CD8-positive, alpha-beta T cell (primary cell): ENCODE measurements at regions of chr2 and their contacts with region 1.

Region 1: GRCh38 chr2:60998628-60999545 is 18.6 kb upstream of the PEX13 start:
- DNase-seq: peak in 3 of 9 experiments; percentile 40 to 77 (median 70)
- ATAC-seq: peak; percentile 91
- H3K4me3 ChIP-seq: no peak overlapping the region
- H3K4me3 Mint-ChIP-seq: no peak overlapping the region
- H3K27ac ChIP-seq: no peak overlapping the region
- H3K27ac Mint-ChIP-seq: no peak overlapping the region
- H3K4me1 ChIP-seq: no peaks in the 10 kb centered on the region
- H3K4me1 Mint-ChIP-seq: no peaks in the 10 kb centered on the region
- H3K27me3 ChIP-seq: no peaks in the 10 kb centered on the region
- H3K27me3 Mint-ChIP-seq: no peaks in the 10 kb centered on the region
- CTCF ChIP-seq: peak; percentile 87

Region 2: GRCh38 chr2:60476206-60476954 is 522.5 kb before region 1 on chr2:
- CTCF ChIA-PET with region 1: no interaction called
- POLR2A ChIA-PET with region 1: no interaction called
- intact Hi-C with region 1: no loop called
- DNase-seq: no peak
- ATAC-seq: no peak
- H3K4me3 ChIP-seq: no peak overlapping the region
- H3K4me3 Mint-ChIP-seq: no peak overlapping the region
- H3K27ac ChIP-seq: no peak overlapping the region
- H3K27ac Mint-ChIP-seq: no peak overlapping the region
- H3K4me1 ChIP-seq: no peaks in the 10 kb centered on the region
- H3K4me1 Mint-ChIP-seq: no peaks in the 10 kb centered on the region
- H3K27me3 ChIP-seq: no peaks in the 10 kb centered on the region
- H3K27me3 Mint-ChIP-seq: peaks cover 6% of the 10 kb centered on the region
- CTCF ChIP-seq: no peak

Region 3: DNA sequence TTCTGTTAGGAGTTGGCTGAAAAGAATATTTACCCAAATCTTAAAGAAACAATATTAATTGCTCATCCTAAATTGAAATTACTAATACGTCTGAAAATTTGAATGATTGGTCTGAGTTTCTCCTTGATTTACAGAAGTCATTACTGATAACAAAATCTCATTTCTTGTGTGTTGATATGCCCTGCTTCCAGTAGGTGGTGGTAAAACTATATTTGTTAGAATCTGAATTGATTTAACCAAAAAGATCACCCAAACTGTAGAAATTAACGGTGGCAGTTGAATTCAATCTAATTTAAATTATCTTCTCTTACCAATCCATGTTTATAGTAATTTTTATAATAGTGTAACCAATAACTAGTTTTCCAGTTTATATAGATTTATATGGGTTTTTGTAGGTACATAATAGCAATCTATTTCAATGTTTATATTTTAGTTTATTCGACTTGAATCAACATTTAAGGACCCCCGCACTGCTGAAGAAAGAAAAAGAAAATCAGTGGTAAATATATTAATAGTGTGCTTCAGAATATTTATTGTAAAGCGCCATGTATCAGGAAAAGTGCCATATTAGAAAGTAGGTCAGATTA is 204.5 kb before region 1 on chr2:
- CTCF ChIA-PET with region 1: interaction called, 124 read pairs
- POLR2A ChIA-PET with region 1: no interaction called
- intact Hi-C with region 1: loop called (anchors 1 kb)
- DNase-seq: peak in 2 of 9 experiments; percentile 49 to 61
- ATAC-seq: peak; percentile 59
- H3K4me3 ChIP-seq: no peak overlapping the region
- H3K4me3 Mint-ChIP-seq: no peak overlapping the region
- H3K27ac ChIP-seq: no peak overlapping the region
- H3K27ac Mint-ChIP-seq: no peak overlapping the region
- H3K4me1 ChIP-seq: no peaks in the 10 kb centered on the region
- H3K4me1 Mint-ChIP-seq: peaks cover 11% of the 10 kb centered on the region
- H3K27me3 ChIP-seq: no peaks in the 10 kb centered on the region
- H3K27me3 Mint-ChIP-seq: no peaks in the 10 kb centered on the region
- CTCF ChIP-seq: peak; percentile 85

Region 4: GRCh38 chr2:60818272-60818671 is 180.6 kb before region 1 on chr2:
- CTCF ChIA-PET with region 1: interaction called, 19 read pairs
- POLR2A ChIA-PET with region 1: no interaction called
- intact Hi-C with region 1: no loop called
- DNase-seq: peak in 5 of 9 experiments; percentile 40 to 70 (median 50)
- ATAC-seq: no peak
- H3K4me3 ChIP-seq: no peak overlapping the region
- H3K4me3 Mint-ChIP-seq: no peak overlapping the region
- H3K27ac ChIP-seq: peak overlapping the region in 1 of 2 experiments; percentile 83
- H3K27ac Mint-ChIP-seq: peak overlapping the region; percentile 78
- H3K4me1 ChIP-seq: peaks cover 32% of the 10 kb centered on the region
- H3K4me1 Mint-ChIP-seq: peaks cover 43% of the 10 kb centered on the region
- H3K27me3 ChIP-seq: no peaks in the 10 kb centered on the region
- H3K27me3 Mint-ChIP-seq: peaks cover 5% of the 10 kb centered on the region
- CTCF ChIP-seq: peak; percentile 19

Region 5: DNA sequence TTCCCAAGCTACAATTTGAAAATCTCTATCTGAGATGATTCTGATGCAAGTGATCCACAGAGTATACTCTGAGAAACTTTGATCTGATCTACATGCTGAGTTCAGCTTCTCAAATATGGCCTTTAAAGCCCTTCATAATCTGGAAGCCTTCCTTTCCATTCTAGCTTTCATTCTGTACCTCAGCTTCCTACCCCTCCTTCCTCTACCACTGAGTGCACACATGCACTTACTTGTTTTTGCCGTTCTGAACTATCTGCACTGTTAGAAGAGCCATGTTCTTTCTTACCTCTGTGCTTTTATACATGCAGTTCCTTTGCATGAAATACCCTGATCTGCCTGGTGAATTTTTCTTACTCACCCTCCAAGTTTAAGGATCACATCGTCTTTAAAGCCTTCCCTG is 92.5 kb before region 1 on chr2:
- CTCF ChIA-PET with region 1: no interaction called
- POLR2A ChIA-PET with region 1: no interaction called
- intact Hi-C with region 1: loop called in 1 of 2 experiments (anchors 10 kb)
- DNase-seq: no peak
- ATAC-seq: peak; percentile 28
- H3K4me3 ChIP-seq: no peak overlapping the region
- H3K4me3 Mint-ChIP-seq: no peak overlapping the region
- H3K27ac ChIP-seq: no peak overlapping the region
- H3K27ac Mint-ChIP-seq: no peak overlapping the region
- H3K4me1 ChIP-seq: no peaks in the 10 kb centered on the region
- H3K4me1 Mint-ChIP-seq: peaks cover 9% of the 10 kb centered on the region
- H3K27me3 ChIP-seq: no peaks in the 10 kb centered on the region
- H3K27me3 Mint-ChIP-seq: no peaks in the 10 kb centered on the region
- CTCF ChIP-seq: no peak

Region 6: GRCh38 chr2:60987041-60987440 is 11.8 kb before region 1 on chr2:
- CTCF ChIA-PET with region 1: interaction called, 11 read pairs
- POLR2A ChIA-PET with region 1: interaction called, 4 read pairs
- intact Hi-C with region 1: no loop called
- DNase-seq: no peak
- ATAC-seq: no peak
- H3K4me3 ChIP-seq: no peak overlapping the region
- H3K4me3 Mint-ChIP-seq: no peak overlapping the region
- H3K27ac ChIP-seq: no peak overlapping the region
- H3K27ac Mint-ChIP-seq: no peak overlapping the region
- H3K4me1 ChIP-seq: no peaks in the 10 kb centered on the region
- H3K4me1 Mint-ChIP-seq: no peaks in the 10 kb centered on the region
- H3K27me3 ChIP-seq: no peaks in the 10 kb centered on the region
- H3K27me3 Mint-ChIP-seq: no peaks in the 10 kb centered on the region
- CTCF ChIP-seq: no peak

Region 7: DNA sequence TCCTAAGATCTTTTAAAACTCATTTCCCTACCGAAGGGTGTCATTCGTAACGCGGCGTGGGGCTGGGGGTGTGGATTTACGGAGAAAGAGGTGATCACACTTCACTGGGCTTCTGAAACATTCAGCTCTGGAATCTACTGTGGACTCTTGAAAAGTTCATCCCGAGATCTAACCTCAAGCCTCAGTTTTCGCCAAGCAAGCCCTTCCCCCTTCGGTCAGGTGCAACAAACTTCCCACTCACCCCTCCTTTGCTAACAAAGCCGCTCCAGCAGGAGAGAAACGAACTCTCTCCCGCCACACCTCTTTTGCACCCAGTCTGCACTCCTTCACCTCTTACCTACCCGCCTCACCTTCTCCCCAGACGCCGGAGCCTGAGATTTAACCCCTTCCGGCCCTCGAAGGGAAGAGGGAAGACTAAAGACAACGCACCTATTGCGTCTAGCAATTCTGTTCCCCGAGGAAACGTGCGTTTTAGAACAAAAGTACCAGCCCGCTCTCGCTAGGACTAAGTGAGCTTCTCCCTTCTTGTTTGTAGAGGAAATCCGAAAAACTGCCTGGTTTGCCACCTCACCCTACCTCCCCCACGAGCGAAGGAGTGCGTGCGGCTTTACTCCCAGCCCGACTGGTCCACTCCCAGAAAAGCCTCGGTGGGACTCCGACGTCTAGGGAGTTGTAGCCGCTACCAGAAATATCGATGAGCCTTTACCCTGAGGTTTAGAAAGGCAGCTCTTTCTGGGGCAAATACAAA is 18.1 kb after region 1 on chr2:
- CTCF ChIA-PET with region 1: no interaction called
- POLR2A ChIA-PET with region 1: no interaction called
- intact Hi-C with region 1: no loop called
- DNase-seq: peak; percentile 30 to 81 (median 67)
- ATAC-seq: peak; percentile 69
- H3K4me3 ChIP-seq: peak overlapping the region; percentile 80 to 99
- H3K4me3 Mint-ChIP-seq: peak overlapping the region; percentile 99
- H3K27ac ChIP-seq: peak overlapping the region; percentile 69 to 84
- H3K27ac Mint-ChIP-seq: peak overlapping the region; percentile 95
- H3K4me1 ChIP-seq: peaks cover 21% of the 10 kb centered on the region
- H3K4me1 Mint-ChIP-seq: peaks cover 46% of the 10 kb centered on the region
- H3K27me3 ChIP-seq: no peaks in the 10 kb centered on the region
- H3K27me3 Mint-ChIP-seq: no peaks in the 10 kb centered on the region
- CTCF ChIP-seq: no peak